Activated CD4-positive, alpha-beta T cell treated with anti-CD3 and anti-CD28 coated beads, Interleukin-2, amount 10 ng/mL, durations not matched to agents 24 days and 14 days (primary cell): ENCODE measurements at regions of chr6 and their contacts with region 1.

Region 1: GRCh38 chr6:155406801-155407200 is 48.8 kb downstream of the NOX3 start:
- DNase-seq: no peak
- H3K4me3 Mint-ChIP-seq: no peak overlapping the region
- H3K27ac Mint-ChIP-seq: no peak overlapping the region
- H3K4me1 Mint-ChIP-seq: no peaks in the 10 kb centered on the region
- H3K27me3 Mint-ChIP-seq: peaks cover 2% of the 10 kb centered on the region

Region 2: DNA sequence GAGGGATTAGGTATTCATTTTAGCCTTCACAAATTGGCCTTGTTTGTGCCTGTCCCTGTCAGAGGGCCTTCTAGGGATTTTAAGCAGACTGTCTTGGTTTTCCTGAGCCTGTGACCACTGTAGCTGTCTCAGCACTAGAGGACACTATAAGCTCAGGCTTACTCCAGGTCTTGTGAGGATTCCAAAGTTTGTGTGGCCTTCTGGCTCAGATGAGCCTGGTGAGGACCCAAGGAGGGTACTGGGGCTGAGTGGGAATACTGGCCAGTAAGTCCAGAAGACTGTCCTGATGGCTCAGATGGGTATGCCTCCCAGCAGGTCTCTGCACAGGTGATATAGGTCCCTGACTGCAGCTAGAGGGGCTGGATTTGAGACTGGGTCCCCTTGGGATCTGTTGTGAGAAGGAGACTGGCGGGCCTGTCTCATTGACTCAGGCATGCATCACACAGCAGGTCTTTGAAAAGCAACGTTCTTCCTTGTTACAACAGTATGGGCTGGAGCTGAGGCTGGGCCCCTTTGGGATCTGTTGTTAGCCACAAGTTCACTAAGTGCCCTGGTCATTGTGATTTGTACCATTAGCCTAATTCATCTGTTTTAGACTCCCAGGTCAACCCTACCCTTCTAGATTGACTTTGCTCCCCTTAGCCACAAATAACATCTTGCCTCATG is 66.2 kb before region 1 on chr6:
- intact Hi-C with region 1: loop called (anchors 2 kb)
- DNase-seq: no peak
- H3K4me3 Mint-ChIP-seq: no peak overlapping the region
- H3K27ac Mint-ChIP-seq: no peak overlapping the region
- H3K4me1 Mint-ChIP-seq: peaks cover 26% of the 10 kb centered on the region
- H3K27me3 Mint-ChIP-seq: no peaks in the 10 kb centered on the region

Region 3: GRCh38 chr6:155377061-155377460 is 29.7 kb before region 1 on chr6:
- intact Hi-C with region 1: no loop called
- DNase-seq: no peak
- H3K4me3 Mint-ChIP-seq: no peak overlapping the region
- H3K27ac Mint-ChIP-seq: no peak overlapping the region
- H3K4me1 Mint-ChIP-seq: no peaks in the 10 kb centered on the region
- H3K27me3 Mint-ChIP-seq: peaks cover 3% of the 10 kb centered on the region

Region 4: DNA sequence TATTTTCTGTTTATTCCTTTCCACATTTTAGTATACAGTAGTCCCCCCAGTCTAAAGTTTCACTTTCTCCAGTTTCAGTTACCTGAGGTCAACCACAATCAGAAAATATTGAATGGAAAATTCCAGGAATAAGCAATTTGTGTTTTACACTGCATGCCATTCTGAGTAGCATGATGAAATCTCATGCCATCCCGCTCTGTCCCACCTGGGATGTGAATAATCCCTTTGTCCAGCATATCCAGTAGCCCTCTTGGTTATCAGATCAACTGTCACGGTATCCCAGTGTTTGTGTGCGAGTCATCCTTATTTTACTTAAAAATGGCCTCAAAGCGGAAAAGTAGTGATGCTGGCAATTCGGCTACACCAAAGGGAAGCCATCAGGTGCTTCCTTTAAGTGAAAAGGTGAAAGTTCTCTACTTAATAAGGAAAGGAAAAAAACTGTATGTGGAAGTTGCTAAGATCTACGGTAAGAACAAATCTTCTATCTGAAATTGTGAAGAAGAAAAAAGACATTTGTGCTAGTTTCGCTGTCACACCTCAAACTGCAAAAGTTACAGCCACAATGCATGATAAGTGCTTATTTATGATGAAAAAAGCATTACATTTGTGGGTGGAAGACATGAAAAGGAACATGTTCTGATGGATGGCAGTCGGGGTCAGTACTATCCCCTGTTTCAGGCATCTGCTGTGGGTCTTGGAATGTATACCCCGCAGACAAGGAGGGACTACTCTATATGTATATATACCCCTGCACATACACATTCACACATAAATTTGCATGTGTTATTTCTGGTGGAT is 37.5 kb after region 1 on chr6:
- intact Hi-C with region 1: loop called (anchors 5 kb)
- DNase-seq: no peak
- H3K4me3 Mint-ChIP-seq: no peak overlapping the region
- H3K27ac Mint-ChIP-seq: peak overlapping the region; percentile 5
- H3K4me1 Mint-ChIP-seq: peaks cover 18% of the 10 kb centered on the region
- H3K27me3 Mint-ChIP-seq: no peaks in the 10 kb centered on the region